K562 (cell line): ENCODE measurements at regions of chr1 and their contacts with region 1.

Region 1: GRCh38 chr1:214328770-214329469 is 48.0 kb downstream of the SMYD2 start:
- DNase-seq: peak; percentile 76 to 83 (median 80)
- ATAC-seq: peak; percentile 90
- H3K4me3 ChIP-seq: no peak overlapping the region
- H3K27ac ChIP-seq: no peak overlapping the region
- H3K4me1 ChIP-seq: no peaks in the 10 kb centered on the region; a peak in 3 of 5 replicates
- H3K27me3 ChIP-seq: no peaks in the 10 kb centered on the region
- CTCF ChIP-seq: peak; percentile 91 to 97 (median 92)
- EP300 ChIP-seq: no peak
- POLR2A ChIP-seq: no peak
- RAD21 ChIP-seq: peak; percentile 97

Region 2: DNA sequence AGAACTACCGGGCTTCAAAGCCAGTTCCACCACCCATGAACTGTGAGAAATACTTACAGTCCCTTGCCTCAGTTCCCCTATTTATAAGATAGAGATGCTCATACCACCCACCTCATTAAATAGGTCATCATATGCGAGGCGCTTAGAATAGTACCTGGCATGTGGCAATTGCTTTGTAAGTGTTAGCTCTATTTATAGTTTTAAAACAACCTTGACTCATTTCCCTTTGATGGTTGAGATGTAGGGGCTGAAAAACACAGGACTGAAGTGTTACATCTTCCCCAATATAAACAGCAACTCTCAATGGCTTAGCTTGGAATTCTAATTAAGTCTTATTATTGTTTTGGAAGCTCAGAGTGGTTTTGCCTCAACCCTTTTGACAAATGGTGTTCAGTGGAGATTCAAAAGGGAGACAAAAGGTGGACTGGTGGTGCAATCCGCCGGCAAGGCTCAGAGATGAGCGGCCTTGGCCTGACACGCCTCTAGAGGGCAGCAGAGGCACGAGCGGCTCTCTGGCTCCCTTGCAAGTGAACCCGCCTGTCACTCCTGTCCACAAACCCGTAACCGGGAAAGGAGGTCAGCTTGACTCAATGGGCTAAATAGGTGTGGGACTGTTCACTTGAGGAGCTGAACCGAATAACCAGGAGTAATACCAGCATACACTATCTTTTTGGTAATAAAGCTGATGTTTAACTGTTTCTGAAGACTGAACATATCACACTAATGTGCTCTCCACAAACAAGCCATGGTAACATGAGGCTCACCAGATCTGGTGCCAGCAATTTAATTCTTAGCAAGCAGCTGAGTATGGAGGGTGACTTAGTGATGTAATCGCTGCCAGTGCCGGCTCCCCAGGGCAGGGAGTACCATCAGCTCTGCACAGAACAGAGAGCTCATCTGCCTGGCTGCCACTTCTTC is 67.5 kb before region 1 on chr1:
- CTCF ChIA-PET with region 1: interaction called, 29 read pairs
- POLR2A ChIA-PET with region 1: interaction called, 5 read pairs
- in situ Hi-C with region 1: loop called (anchors 5 kb)
- intact Hi-C with region 1: loop called (anchors 1 kb)
- DNase-seq: peak; percentile 77 to 88 (median 80)
- ATAC-seq: peak; percentile 99
- H3K4me3 ChIP-seq: no peak overlapping the region
- H3K27ac ChIP-seq: no peak overlapping the region
- H3K4me1 ChIP-seq: peaks cover 0 to 4% of the 10 kb centered on the region in 2 experiments; a peak in 1 of 5 replicates
- H3K27me3 ChIP-seq: peaks cover 7 to 10% of the 10 kb centered on the region in 2 experiments; a peak in 4 of 5 replicates
- CTCF ChIP-seq: peak; percentile 91 to 97 (median 96)
- EP300 ChIP-seq: no peak
- POLR2A ChIP-seq: no peak
- RAD21 ChIP-seq: peak; percentile 84 to 94

Region 3: GRCh38 chr1:214446772-214447556 is 118.0 kb after region 1 on chr1:
- CTCF ChIA-PET with region 1: no interaction called
- POLR2A ChIA-PET with region 1: no interaction called
- in situ Hi-C with region 1: no loop called
- intact Hi-C with region 1: loop called (anchors 5 kb)
- DNase-seq: no peak
- ATAC-seq: no peak
- H3K4me3 ChIP-seq: no peak overlapping the region
- H3K27ac ChIP-seq: no peak overlapping the region
- H3K4me1 ChIP-seq: no peaks in the 10 kb centered on the region
- H3K27me3 ChIP-seq: peaks cover 1 to 17% of the 10 kb centered on the region in 2 experiments; a peak in 4 of 5 replicates
- CTCF ChIP-seq: no peak
- EP300 ChIP-seq: no peak
- POLR2A ChIP-seq: no peak
- RAD21 ChIP-seq: no peak

Region 4: GRCh38 chr1:214632091-214632490 is 303.2 kb after region 1 on chr1:
- CTCF ChIA-PET with region 1: interaction called, 24 read pairs
- POLR2A ChIA-PET with region 1: no interaction called
- in situ Hi-C with region 1: no loop called
- intact Hi-C with region 1: loop called (anchors 2 kb)
- DNase-seq: no peak
- ATAC-seq: no peak
- H3K4me3 ChIP-seq: no peak overlapping the region
- H3K27ac ChIP-seq: no peak overlapping the region
- H3K4me1 ChIP-seq: no peaks in the 10 kb centered on the region
- H3K27me3 ChIP-seq: no peaks in the 10 kb centered on the region
- CTCF ChIP-seq: no peak
- EP300 ChIP-seq: no peak
- POLR2A ChIP-seq: no peak
- RAD21 ChIP-seq: no peak